Activated naive CD4-positive, alpha-beta T cell treated with anti-CD3 and anti-CD28 coated beads for 36 hours (primary cell): ENCODE measurements at regions of chr3 and their contacts with region 1.

Region 1: DNA sequence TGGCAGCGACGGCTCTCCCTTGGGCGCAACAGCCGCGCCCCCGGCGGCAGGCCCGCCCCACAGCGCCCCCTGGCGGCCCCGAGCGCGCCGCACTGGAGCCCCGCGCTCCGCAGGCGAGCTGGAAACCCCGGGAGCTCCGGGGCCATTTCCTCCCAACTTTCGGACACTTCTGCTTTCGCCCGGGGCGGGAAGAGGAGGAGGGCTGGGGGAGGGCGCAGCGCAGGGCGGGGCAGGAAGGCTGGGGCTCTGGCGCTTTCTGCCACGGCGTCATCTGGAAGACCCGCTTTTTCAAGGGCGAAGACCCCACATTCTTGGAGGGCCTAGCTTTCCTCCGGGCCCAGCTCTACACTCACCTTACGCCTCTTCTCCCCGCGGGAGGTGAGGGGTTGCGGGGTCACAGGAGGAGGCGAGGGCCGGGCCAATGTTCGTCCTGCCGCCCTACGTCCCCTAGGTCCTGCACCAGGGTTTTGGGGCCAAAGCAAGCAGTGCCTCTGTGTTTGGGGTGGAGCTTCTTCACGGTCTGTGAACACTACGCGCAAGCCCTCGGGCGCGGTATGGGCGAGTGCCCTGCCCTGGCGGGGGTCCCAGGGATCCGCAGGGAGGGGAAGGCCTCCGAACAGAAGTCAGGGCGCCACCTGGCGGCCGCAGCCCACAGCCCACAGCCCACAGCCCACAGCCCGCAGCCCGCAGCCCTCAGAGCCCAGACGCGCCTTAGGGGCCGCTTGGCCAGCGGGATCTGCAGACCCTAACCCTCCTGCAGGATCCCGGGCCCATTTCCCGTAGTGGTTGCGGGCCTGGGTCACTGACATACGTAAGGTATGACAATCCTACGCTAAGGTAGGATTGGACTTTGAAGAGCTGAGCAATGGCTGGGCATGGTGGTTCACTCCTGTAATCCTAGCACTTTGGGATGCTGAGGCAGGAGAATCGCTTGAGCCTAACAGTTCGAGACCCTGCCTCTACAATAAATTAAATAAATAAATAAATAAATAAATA is 31.1 kb downstream of the FOXL2 start:
- DNase-seq: peak; percentile 89
- H3K4me3 Mint-ChIP-seq: peak overlapping the region; percentile 81
- H3K27ac Mint-ChIP-seq: peak overlapping the region; percentile 24
- H3K4me1 Mint-ChIP-seq: peaks cover 4% of the 10 kb centered on the region
- H3K27me3 Mint-ChIP-seq: no peaks in the 10 kb centered on the region

Region 2: GRCh38 chr3:138023754-138024153 is 892.0 kb before region 1 on chr3:
- CTCF ChIA-PET with region 1: no interaction called
- intact Hi-C with region 1: no loop called
- DNase-seq: no peak
- H3K4me3 Mint-ChIP-seq: no peak overlapping the region
- H3K27ac Mint-ChIP-seq: no peak overlapping the region
- H3K4me1 Mint-ChIP-seq: no peaks in the 10 kb centered on the region
- H3K27me3 Mint-ChIP-seq: peaks cover 10% of the 10 kb centered on the region

Region 3: GRCh38 chr3:138068579-138069174 is 847.1 kb before region 1 on chr3:
- CTCF ChIA-PET with region 1: interaction called, 3 read pairs
- intact Hi-C with region 1: loop called (anchors 2 kb)
- DNase-seq: peak; percentile 87
- H3K4me3 Mint-ChIP-seq: no peak overlapping the region
- H3K27ac Mint-ChIP-seq: no peak overlapping the region
- H3K4me1 Mint-ChIP-seq: peaks cover 6% of the 10 kb centered on the region
- H3K27me3 Mint-ChIP-seq: peaks cover 10% of the 10 kb centered on the region

Region 4: GRCh38 chr3:138434276-138434874 is 481.4 kb before region 1 on chr3 and contains the start of gene ESYT3:
- CTCF ChIA-PET with region 1: interaction called, 16 read pairs
- intact Hi-C with region 1: no loop called
- DNase-seq: peak; percentile 82
- H3K4me3 Mint-ChIP-seq: peak within 1 kb of the TSS; percentile 75
- H3K27ac Mint-ChIP-seq: no peak within 1 kb of the TSS
- H3K4me1 Mint-ChIP-seq: peaks cover 11% of the 10 kb centered on the region
- H3K27me3 Mint-ChIP-seq: peaks cover 55% of the 10 kb centered on the region
- total RNA-seq, gene ESYT3: 0.96 to 1.1 TPM

Region 5: GRCh38 chr3:138625707-138626365 is 290.0 kb before region 1 on chr3:
- CTCF ChIA-PET with region 1: interaction called, 11 read pairs
- intact Hi-C with region 1: no loop called
- DNase-seq: no peak
- H3K4me3 Mint-ChIP-seq: no peak overlapping the region
- H3K27ac Mint-ChIP-seq: no peak overlapping the region
- H3K4me1 Mint-ChIP-seq: peaks cover 7% of the 10 kb centered on the region
- H3K27me3 Mint-ChIP-seq: no peaks in the 10 kb centered on the region

Region 6: GRCh38 chr3:138705675-138706074 is 210.1 kb before region 1 on chr3:
- CTCF ChIA-PET with region 1: interaction called, 86 read pairs
- intact Hi-C with region 1: no loop called
- DNase-seq: no peak
- H3K4me3 Mint-ChIP-seq: no peak overlapping the region
- H3K27ac Mint-ChIP-seq: no peak overlapping the region
- H3K4me1 Mint-ChIP-seq: no peaks in the 10 kb centered on the region
- H3K27me3 Mint-ChIP-seq: no peaks in the 10 kb centered on the region

Region 7: GRCh38 chr3:138834359-138835212 is 81.2 kb before region 1 on chr3 and contains the start of gene PIK3CB:
- CTCF ChIA-PET with region 1: interaction called, 5 read pairs
- intact Hi-C with region 1: loop called (anchors 1 kb)
- DNase-seq: peak; percentile 89
- H3K4me3 Mint-ChIP-seq: peak within 1 kb of the TSS; percentile 98
- H3K27ac Mint-ChIP-seq: peak within 1 kb of the TSS; percentile 99
- H3K4me1 Mint-ChIP-seq: peaks cover 29% of the 10 kb centered on the region
- H3K27me3 Mint-ChIP-seq: no peaks in the 10 kb centered on the region
- total RNA-seq, gene PIK3CB: 19.2 to 20.6 TPM

Region 8: GRCh38 chr3:138898301-138898700 is 17.5 kb before region 1 on chr3:
- CTCF ChIA-PET with region 1: interaction called, 13 read pairs
- intact Hi-C with region 1: no loop called
- DNase-seq: no peak
- H3K4me3 Mint-ChIP-seq: no peak overlapping the region
- H3K27ac Mint-ChIP-seq: no peak overlapping the region
- H3K4me1 Mint-ChIP-seq: no peaks in the 10 kb centered on the region
- H3K27me3 Mint-ChIP-seq: no peaks in the 10 kb centered on the region